ENCODE measurements at regions of chr21 and their contacts with region 1.

Region 1: DNA sequence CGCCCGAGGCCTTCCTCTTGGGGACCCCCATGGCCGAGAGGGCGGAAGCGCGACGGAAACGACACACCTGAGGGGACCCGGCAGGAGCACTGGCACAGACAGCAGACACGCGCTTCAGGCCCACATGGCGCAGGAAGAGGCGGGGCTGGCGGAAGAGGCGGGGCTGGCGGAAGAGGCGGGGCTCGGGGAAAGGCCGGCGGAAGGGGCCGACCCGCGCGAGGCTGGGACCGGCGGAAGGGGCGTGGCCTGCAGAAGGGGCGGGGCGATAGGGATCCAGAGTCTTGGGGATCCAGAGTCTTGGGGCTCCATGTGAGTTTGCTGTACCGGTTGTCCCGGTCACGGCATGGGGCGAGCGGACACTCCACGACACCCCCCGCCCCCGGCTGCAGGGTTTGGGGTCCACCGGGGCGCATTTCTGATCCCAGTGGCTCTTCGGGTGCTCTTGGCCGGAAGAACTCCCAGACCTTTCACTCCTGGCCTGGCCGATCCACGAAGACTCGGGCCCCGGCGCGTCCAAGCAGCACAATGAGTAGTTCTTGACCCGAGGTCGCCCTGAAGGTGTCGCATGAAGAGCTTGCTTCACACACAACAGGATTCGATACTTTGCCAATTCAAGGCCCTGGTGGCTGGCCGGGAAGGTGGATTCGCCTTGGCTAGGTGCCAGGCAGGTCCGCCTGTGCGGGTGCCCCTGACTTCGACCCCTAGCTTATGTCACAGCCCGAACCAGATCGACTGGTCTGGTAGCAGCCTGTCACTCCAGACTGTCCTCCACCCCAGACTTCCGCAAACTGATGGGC is at the start of gene URB1:
- DNase-seq: peak; percentile 97
- ATAC-seq: peak; percentile 95
- H3K4me3 Mint-ChIP-seq: peak within 1 kb of the TSS; percentile 89
- H3K27ac Mint-ChIP-seq: peak within 1 kb of the TSS; percentile 88
- H3K4me1 Mint-ChIP-seq: peaks cover 43% of the 10 kb centered on the region
- H3K27me3 Mint-ChIP-seq: peaks cover 2% of the 10 kb centered on the region
- total RNA-seq, gene URB1: 24.6 to 28.5 TPM

Region 2: DNA sequence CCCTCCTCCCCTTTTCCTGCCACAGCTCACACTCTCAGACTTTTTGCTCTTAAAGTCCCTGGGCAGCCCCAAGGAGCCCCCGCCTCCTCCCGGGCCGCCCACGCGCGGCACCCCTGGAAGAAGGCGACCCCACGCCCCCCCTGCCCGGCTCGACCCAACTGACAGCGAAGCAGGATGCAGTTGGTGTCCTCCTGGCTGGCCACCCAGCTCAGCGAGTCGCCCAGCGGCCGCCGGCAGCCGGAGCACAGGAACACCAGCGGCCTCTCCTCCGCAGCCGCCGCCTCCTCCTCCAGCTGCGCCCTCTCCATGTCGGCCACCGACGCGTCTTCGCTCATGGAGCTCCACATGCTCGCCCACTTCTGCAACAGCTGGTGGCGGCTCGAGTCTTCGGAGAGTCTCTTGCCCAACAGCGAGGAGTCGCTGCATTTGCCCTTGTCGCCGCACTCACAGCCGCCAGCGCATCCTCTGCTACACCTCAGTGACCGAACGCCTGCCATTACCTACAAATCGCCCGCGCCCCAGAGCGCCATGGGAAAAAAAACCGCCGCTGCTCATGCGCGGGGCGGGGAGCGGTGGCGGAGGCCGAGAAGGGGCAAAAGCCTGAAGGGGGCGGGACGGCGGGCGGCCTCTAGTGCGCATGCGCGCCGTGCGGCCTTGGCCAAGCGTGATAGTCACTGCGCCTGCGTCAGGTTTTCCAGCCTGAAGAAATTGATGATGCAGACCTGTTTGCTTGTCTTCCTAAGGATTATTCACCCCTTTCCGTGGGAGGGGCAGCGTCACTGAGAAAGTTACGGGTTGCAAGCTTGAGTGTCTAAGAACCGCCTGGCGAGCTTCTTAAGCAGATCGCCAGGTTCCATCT is 114.3 kb before region 1 on chr21 and contains the start of gene MIS18A:
- CTCF ChIA-PET with region 1: no interaction called
- POLR2A ChIA-PET with region 1: no interaction called
- intact Hi-C with region 1: loop called in 1 of 2 experiments (anchors 1 kb)
- DNase-seq: peak; percentile 98
- ATAC-seq: peak; percentile 90
- H3K4me3 Mint-ChIP-seq: peak within 1 kb of the TSS; percentile 86
- H3K27ac Mint-ChIP-seq: peak within 1 kb of the TSS; percentile 84
- H3K4me1 Mint-ChIP-seq: peaks cover 17% of the 10 kb centered on the region
- H3K27me3 Mint-ChIP-seq: no peaks in the 10 kb centered on the region
- total RNA-seq, gene MIS18A: 21.5 to 35.3 TPM

Region 3: DNA sequence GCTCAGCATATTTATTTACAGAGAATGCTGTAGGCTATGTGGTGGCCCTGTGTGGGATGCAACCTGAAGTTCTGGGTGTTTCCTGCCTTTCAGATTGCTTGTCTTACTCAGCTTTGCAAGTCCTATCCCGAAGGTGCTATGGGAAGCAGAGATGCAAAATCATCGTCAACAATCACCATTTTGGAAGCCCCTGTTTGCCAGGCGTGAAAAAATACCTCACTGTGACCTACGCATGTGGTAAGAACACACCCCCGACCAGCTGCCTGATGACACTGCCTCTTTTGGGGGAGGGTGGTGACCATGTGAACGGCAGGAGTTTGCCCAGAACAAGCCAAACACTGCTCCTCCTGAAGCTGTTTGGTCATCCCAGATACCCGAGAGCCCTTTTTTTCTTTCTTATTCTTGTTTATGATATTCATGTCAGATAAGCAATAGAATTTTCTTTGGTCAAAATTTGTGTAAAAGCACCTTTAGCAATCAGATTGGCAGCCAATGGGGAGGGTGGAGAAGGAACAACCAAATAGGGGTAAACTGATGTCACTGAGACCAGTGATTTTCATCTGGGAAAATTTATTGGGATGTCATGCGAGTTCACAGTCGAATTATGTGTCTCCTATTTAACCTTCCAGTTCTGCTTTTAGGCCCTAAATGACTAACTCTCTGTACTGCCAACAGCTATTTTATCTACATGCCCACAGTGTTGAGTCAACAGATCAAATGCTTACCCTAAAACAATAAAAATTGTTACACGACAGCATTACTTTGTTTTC is 102.0 kb after region 1 on chr21:
- CTCF ChIA-PET with region 1: interaction called, 4 read pairs
- POLR2A ChIA-PET with region 1: no interaction called
- intact Hi-C with region 1: loop called in 1 of 2 experiments (anchors 1 kb)
- DNase-seq: no peak
- ATAC-seq: no peak
- H3K4me3 Mint-ChIP-seq: no peak overlapping the region
- H3K27ac Mint-ChIP-seq: no peak overlapping the region
- H3K4me1 Mint-ChIP-seq: peaks cover 30% of the 10 kb centered on the region
- H3K27me3 Mint-ChIP-seq: no peaks in the 10 kb centered on the region

Region 4: DNA sequence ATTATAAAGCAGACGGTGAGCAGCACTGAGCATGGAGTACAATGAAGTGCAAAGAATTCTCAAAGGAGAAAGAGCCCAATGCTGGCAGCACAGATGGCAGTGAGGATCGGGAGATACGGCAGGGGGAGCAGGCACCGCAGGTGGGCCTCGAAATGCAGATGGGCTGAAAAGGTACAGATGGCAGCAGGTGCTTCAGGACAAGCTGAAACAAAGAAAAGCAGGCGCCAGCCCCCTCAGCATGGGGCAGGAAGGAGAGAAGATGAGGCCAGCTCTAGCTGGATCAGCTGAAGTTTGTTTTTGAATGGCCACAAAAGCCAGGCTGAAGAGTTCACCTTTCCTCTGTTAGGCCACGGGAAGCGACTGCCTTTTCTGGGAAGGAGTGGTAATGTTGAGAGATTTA is 211.4 kb after region 1 on chr21:
- CTCF ChIA-PET with region 1: interaction called, 12 read pairs
- POLR2A ChIA-PET with region 1: interaction called, 3 read pairs
- intact Hi-C with region 1: loop called (anchors 2 kb)
- DNase-seq: no peak
- ATAC-seq: no peak
- H3K4me3 Mint-ChIP-seq: no peak overlapping the region
- H3K27ac Mint-ChIP-seq: no peak overlapping the region
- H3K4me1 Mint-ChIP-seq: no peaks in the 10 kb centered on the region
- H3K27me3 Mint-ChIP-seq: no peaks in the 10 kb centered on the region

Region 5: GRCh38 chr21:32770871-32771523 is 377.9 kb after region 1 on chr21:
- CTCF ChIA-PET with region 1: no interaction called
- POLR2A ChIA-PET with region 1: no interaction called
- intact Hi-C with region 1: loop called in 1 of 2 experiments (anchors 1 kb)
- DNase-seq: peak; percentile 76
- ATAC-seq: peak; percentile 17
- H3K4me3 Mint-ChIP-seq: peak overlapping the region; percentile 99
- H3K27ac Mint-ChIP-seq: peak overlapping the region; percentile 96
- H3K4me1 Mint-ChIP-seq: peaks cover 54% of the 10 kb centered on the region
- H3K27me3 Mint-ChIP-seq: no peaks in the 10 kb centered on the region

Region 6: DNA sequence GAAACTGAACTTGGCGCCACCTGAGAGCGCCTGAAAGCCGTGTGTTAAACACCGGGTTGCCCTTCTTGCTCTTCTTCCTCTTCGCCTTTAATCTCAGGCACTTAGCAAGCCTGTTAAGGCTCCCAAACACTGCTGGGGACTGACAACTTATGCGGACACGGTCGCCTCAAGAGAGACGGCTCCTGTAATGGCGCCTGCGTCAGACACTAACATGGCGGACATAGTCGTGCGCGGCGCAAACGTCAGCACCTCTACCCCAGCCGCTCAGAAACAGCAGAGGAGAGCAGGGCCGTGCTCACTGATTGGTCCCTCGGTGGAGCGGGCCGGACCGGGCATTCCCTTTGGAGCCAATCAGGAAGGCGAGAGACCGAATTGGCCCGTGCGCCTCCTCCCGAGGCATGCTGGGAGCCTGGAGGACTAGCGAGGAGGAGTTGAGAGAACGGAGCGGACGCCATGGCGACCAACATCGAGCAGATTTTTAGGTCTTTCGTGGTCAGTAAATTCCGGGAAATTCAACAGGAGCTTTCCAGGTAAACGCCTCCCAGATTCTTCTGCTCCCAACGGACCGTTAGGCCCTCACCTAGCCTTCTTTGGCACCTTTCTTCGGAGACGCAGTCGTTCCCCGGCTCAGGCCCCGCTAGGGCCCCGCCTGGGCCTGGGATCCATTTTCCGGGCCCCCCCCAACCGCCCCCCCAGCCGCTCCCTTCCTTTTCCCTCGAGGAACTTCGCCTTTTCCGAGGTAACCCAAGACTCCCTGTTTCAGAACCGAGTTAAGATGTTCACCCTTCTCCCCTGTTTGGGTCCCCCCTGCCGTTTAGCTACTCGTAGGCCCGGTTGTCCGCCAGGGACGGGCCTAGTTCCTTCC is 1149.8 kb after region 1 on chr21 and contains the start of gene SON:
- CTCF ChIA-PET with region 1: no interaction called
- POLR2A ChIA-PET with region 1: no interaction called
- intact Hi-C with region 1: loop called in 1 of 2 experiments (anchors 2 kb)
- DNase-seq: peak; percentile 99
- ATAC-seq: peak; percentile 94
- H3K4me3 Mint-ChIP-seq: peak within 1 kb of the TSS; percentile 85
- H3K27ac Mint-ChIP-seq: peak within 1 kb of the TSS; percentile 98
- H3K4me1 Mint-ChIP-seq: peaks cover 29% of the 10 kb centered on the region
- H3K27me3 Mint-ChIP-seq: no peaks in the 10 kb centered on the region
- total RNA-seq, gene SON: 299 to 380 TPM